ENCODE measurements at regions of chr19 and their contacts with region 1.

Region 1: GRCh38 chr19:37217855-37218591 is at the start of gene ZNF383:
- DNase-seq: peak; percentile 63 to 81 (median 78)
- ATAC-seq: peak; percentile 95
- H3K4me3 ChIP-seq: peak within 1 kb of the TSS; percentile 93
- H3K4me3 Mint-ChIP-seq: peak within 1 kb of the TSS; percentile 90 to 97 (median 92)
- H3K27ac ChIP-seq: peak within 1 kb of the TSS; percentile 94
- H3K27ac Mint-ChIP-seq: peak within 1 kb of the TSS; percentile 74 to 99 (median 91)
- H3K4me1 ChIP-seq: peaks cover 0 to 6% of the 10 kb centered on the region in 2 donors
- H3K4me1 Mint-ChIP-seq: peaks cover 21 to 33% (median 31%) of the 10 kb centered on the region in 7 donors
- H3K27me3 ChIP-seq: no peaks in the 10 kb centered on the region
- H3K27me3 Mint-ChIP-seq: no peaks in the 10 kb centered on the region
- total RNA-seq, gene ZNF383: 12.2 to 33.4 (median 21.2) TPM

Region 2: DNA sequence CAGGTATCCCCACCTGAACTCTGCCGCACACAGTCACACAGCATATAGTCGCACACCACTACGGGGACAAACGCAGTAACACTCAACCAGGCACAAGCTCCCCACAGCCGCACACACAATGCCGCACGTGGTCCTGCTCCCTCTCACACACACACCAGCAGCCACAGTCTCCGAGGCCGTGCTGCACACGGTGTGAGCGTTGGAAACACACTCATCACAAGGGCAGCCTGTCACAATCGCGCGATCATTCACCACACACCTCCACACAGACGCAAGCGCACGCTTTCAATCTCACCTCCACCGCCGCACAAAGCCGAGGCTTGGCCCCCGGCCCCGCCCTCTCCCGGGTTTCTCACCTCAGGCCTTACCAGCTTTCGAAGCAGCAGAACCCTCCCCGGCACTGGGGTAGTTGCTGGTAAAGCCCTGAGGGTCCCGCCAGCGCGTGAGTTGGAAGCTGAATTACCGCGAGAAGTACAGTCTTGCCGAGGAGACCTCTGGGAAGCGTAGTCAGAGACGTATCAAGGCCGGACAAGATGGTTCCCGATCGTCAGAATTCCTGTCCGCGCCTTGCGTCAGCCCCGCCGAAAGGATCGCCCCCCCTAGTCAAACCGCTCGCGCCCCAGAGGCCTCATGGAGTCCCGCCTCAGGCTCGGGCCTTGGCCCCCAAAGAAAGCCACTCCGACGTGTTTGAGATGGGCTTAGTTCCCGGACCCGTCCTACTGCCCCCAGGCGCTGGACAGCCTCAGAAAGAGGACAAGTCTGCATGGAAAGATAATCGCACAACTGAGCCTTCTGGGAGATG is 728.7 kb before region 1 on chr19 and contains the start of gene ZNF566:
- CTCF ChIA-PET with region 1: no interaction called
- POLR2A ChIA-PET with region 1: no interaction called
- intact Hi-C with region 1: loop called in 1 of 2 experiments (anchors 1 kb)
- DNase-seq: peak; percentile 74 to 98 (median 94)
- ATAC-seq: peak; percentile 95
- H3K4me3 ChIP-seq: peak within 1 kb of the TSS; percentile 97
- H3K4me3 Mint-ChIP-seq: peak within 1 kb of the TSS; percentile 93 to 99 (median 98)
- H3K27ac ChIP-seq: peak within 1 kb of the TSS; percentile 90
- H3K27ac Mint-ChIP-seq: peak within 1 kb of the TSS; percentile 93 to 99 (median 98)
- H3K4me1 ChIP-seq: peaks cover 9 to 10% of the 10 kb centered on the region in 2 donors
- H3K4me1 Mint-ChIP-seq: peaks cover 22 to 43% (median 30%) of the 10 kb centered on the region in 7 donors
- H3K27me3 ChIP-seq: no peaks in the 10 kb centered on the region
- H3K27me3 Mint-ChIP-seq: no peaks in the 10 kb centered on the region
- total RNA-seq, gene ZNF566: 9.2 to 29.8 (median 9.3) TPM

Region 3: GRCh38 chr19:36687214-36688056 is 530.6 kb before region 1 on chr19 and contains the start of gene ZNF567:
- CTCF ChIA-PET with region 1: no interaction called
- POLR2A ChIA-PET with region 1: no interaction called
- intact Hi-C with region 1: loop called in 1 of 2 experiments (anchors 10 kb)
- DNase-seq: peak; percentile 90 to 99 (median 93)
- ATAC-seq: peak; percentile 97
- H3K4me3 ChIP-seq: peak within 1 kb of the TSS; percentile 85
- H3K4me3 Mint-ChIP-seq: peak within 1 kb of the TSS; percentile 94 to 100 (median 98)
- H3K27ac ChIP-seq: peak within 1 kb of the TSS; percentile 86
- H3K27ac Mint-ChIP-seq: peak within 1 kb of the TSS; percentile 92 to 97 (median 95)
- H3K4me1 ChIP-seq: peaks cover 13 to 22% of the 10 kb centered on the region in 2 donors
- H3K4me1 Mint-ChIP-seq: peaks cover 26 to 49% (median 40%) of the 10 kb centered on the region in 7 donors
- H3K27me3 ChIP-seq: no peaks in the 10 kb centered on the region
- H3K27me3 Mint-ChIP-seq: peaks cover 0 to 5% (median 0%) of the 10 kb centered on the region in 5 donors
- total RNA-seq, gene ZNF567: 7.0 to 18.3 (median 9.3) TPM

Region 4: DNA sequence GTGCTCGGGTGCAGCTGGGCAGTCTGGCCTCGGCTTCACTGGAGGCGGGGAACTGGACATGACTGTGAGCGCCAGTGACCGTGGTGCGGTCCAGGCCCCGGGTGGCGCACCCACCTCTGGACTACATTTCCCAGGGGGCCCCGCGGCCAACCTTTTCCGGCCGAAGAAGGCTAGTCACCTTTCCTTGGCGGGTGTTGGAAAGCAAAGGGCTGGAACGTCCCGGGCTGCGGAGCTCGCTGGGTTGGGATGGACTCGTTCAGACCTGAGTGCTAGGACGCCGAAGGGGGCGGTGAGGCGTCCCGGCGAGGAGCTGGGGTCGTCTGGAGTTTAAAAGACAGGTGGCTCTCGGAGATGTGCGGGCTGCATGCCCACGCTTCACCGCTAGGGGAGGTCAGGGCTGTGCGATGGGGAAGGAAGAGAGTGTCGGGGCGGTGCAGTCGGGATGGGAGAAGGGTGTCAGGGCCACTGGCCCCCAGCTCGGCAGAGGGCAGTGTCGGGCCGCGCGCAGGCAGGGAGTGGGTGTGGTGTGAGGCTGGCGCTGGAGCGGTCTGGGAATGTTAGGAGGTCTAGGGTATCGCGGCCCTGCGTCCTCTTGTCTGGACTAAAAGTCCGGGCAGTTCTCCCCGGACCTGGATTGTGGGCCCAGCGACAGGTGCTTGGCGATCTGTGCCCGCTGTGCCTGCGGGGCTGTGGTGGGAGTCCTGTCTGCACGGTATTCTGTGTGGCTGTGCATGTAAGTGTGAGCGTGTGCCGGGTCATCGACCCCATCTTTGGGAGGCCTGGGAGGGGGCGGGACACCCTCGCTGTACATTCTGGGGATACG is 244.8 kb before region 1 on chr19:
- CTCF ChIA-PET with region 1: no interaction called
- POLR2A ChIA-PET with region 1: interaction called, 3 read pairs
- intact Hi-C with region 1: loop called (anchors 1 to 5 kb)
- DNase-seq: peak; percentile 56 to 84 (median 73)
- ATAC-seq: peak; percentile 96
- H3K4me3 ChIP-seq: peak overlapping the region; percentile 100
- H3K4me3 Mint-ChIP-seq: peak overlapping the region; percentile 92 to 99 (median 97)
- H3K27ac ChIP-seq: peak overlapping the region; percentile 75
- H3K27ac Mint-ChIP-seq: peak overlapping the region; percentile 83 to 97 (median 92)
- H3K4me1 ChIP-seq: peaks cover 5 to 15% of the 10 kb centered on the region in 2 donors
- H3K4me1 Mint-ChIP-seq: peaks cover 9 to 22% (median 13%) of the 10 kb centered on the region in 7 donors
- H3K27me3 ChIP-seq: no peaks in the 10 kb centered on the region
- H3K27me3 Mint-ChIP-seq: no peaks in the 10 kb centered on the region

Region 5: DNA sequence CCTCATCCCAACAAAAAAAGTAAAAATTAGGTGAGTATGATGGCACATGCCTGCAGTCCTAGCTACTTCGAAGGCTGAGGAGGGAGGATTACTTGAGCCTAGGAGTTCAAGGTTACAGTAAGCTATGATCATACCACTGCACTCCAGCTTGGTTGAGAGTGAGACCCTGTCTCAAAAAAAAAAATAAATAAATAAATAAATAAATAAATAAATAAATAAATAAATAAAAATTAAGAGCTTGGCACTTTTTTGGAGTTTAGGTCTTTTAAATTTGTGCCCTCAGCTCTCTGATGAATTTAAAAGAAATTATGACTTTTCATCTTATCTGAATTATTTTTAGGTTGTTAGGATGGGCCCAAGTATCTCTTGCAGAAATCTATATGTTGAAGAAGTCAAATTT is 130.9 kb before region 1 on chr19:
- CTCF ChIA-PET with region 1: no interaction called
- POLR2A ChIA-PET with region 1: no interaction called
- intact Hi-C with region 1: no loop called
- DNase-seq: no peak
- ATAC-seq: no peak
- H3K4me3 ChIP-seq: no peak overlapping the region
- H3K4me3 Mint-ChIP-seq: no peak overlapping the region
- H3K27ac ChIP-seq: no peak overlapping the region
- H3K27ac Mint-ChIP-seq: no peak overlapping the region
- H3K4me1 ChIP-seq: no peaks in the 10 kb centered on the region
- H3K4me1 Mint-ChIP-seq: peaks cover 0 to 11% (median 2%) of the 10 kb centered on the region in 7 donors
- H3K27me3 ChIP-seq: no peaks in the 10 kb centered on the region
- H3K27me3 Mint-ChIP-seq: no peaks in the 10 kb centered on the region

Region 6: DNA sequence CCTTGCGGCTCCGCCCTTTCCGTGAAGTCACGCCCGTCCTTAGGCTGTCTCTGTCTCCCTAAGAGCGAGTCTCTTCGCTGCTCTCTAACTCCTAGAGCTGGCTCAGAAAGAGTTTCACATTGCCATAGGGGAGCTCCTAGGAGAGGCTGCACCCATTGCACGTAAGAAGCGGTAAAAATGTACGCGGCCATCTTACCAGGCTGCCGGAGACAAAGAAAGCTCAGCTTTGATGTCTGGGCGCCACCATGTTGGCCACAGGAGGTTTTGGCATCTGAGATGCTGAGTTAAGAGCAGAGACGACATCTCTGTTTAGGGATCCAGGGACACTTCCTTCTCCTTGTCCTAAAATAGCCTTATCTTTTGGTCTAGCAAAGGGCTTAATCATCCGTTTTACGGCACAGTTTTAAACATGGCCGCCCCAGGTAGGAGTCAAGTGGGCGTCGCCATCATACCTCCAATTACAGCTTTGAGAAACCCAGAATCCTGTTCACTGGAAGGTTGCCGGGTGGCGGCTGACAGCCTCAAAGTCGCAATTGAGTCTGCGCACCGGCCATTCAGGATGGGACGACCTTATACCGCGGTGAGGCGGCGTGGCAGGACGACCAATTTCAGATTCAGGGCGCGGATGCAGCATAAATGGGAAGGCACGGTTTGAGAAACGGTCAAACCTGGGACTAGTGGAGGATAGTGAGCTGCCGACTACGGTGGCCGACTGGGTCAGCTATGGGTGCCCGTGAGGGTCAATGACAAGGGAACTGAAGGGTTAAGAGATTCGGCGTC is 288.6 kb after region 1 on chr19 and contains the start of gene ZNF793:
- CTCF ChIA-PET with region 1: no interaction called
- POLR2A ChIA-PET with region 1: interaction called, 3 read pairs
- intact Hi-C with region 1: loop called in 1 of 2 experiments (anchors 2 kb)
- DNase-seq: peak; percentile 33 to 88 (median 83)
- ATAC-seq: peak; percentile 90
- H3K4me3 ChIP-seq: peak within 1 kb of the TSS; percentile 83
- H3K4me3 Mint-ChIP-seq: no peak within 1 kb of the TSS
- H3K27ac ChIP-seq: peak within 1 kb of the TSS; percentile 90
- H3K27ac Mint-ChIP-seq: no peak within 1 kb of the TSS
- H3K4me1 ChIP-seq: peaks cover 0 to 14% of the 10 kb centered on the region in 2 donors
- H3K4me1 Mint-ChIP-seq: peaks cover 0 to 2% (median 0%) of the 10 kb centered on the region in 7 donors
- H3K27me3 ChIP-seq: no peaks in the 10 kb centered on the region
- H3K27me3 Mint-ChIP-seq: peaks cover 0 to 5% (median 0%) of the 10 kb centered on the region in 5 donors
- total RNA-seq, gene ZNF793: 1.1 to 11.7 (median 6.0) TPM

Region 7: GRCh38 chr19:37906869-37907734 is 689.1 kb after region 1 on chr19 and contains the start of gene SIPA1L3:
- CTCF ChIA-PET with region 1: no interaction called
- POLR2A ChIA-PET with region 1: no interaction called
- intact Hi-C with region 1: loop called in 1 of 2 experiments (anchors 5 kb)
- DNase-seq: peak; percentile 77 to 91 (median 89)
- ATAC-seq: peak; percentile 99
- H3K4me3 ChIP-seq: peak within 1 kb of the TSS; percentile 99
- H3K4me3 Mint-ChIP-seq: peak within 1 kb of the TSS; percentile 69 to 96 (median 90)
- H3K27ac ChIP-seq: peak within 1 kb of the TSS; percentile 89
- H3K27ac Mint-ChIP-seq: peak within 1 kb of the TSS; percentile 67 to 95 (median 90)
- H3K4me1 ChIP-seq: peaks cover 6 to 9% of the 10 kb centered on the region in 2 donors
- H3K4me1 Mint-ChIP-seq: peaks cover 24 to 39% (median 35%) of the 10 kb centered on the region in 7 donors
- H3K27me3 ChIP-seq: no peaks in the 10 kb centered on the region
- H3K27me3 Mint-ChIP-seq: peaks cover 0 to 2% (median 0%) of the 10 kb centered on the region in 5 donors
- total RNA-seq, gene SIPA1L3: 17.4 to 38.7 (median 34.8) TPM

Measured in naive thymus-derived CD4-positive, alpha-beta T cell (primary cell).